ENCODE measurements at regions of chr9 and their contacts with region 1.

Region 1: DNA sequence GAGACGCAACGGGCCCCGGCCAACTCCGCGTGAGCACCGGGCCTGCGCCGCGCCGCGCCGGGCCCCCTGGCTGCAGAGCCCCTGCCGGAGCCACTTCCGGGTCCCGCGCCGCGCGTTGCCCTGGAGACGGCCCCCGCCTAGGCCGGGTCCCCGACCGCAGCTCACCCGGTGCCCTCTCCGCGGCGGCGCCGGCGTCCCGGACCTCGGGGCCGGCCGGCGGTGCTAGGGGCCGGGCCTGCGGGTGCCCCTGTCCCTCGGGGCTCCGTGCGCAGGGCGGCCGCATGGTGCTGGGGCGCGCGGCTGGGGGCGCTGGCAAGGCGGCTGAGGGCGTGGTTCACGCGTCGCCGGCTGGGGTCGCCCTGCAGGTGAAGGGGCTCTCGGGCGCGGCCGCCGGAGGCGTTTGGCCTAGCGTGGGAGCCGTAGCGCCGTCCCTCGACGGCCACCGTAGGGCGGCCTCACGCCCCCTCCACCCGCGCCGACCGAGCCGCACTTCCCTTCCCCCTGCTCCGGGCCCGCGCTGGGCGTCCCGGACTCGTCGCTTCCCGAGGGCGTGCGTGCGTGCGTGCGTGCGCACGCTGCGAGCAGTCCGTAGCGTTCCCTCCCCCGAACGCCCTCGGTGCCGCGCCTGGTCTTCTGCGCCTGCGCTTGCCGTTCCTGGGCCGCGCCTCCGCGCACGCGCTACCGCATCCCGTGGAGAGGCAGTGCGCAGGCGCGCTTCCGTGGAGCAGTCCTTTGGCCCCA is at the start of gene TMEM250:
- DNase-seq: peak; percentile 95
- ATAC-seq: peak; percentile 93
- H3K4me3 ChIP-seq: peak within 1 kb of the TSS; percentile 64
- H3K27ac ChIP-seq: peak within 1 kb of the TSS; percentile 74
- H3K4me1 ChIP-seq: peaks cover 11% of the 10 kb centered on the region
- H3K27me3 ChIP-seq: no peaks in the 10 kb centered on the region; the same call in 1 of the 2 replicates
- CTCF ChIP-seq: peak; percentile 1; the same call in 1 of the 2 replicates
- POLR2A ChIP-seq: peak; percentile 28; the same call in 1 of the 2 replicates
- RAD21 ChIP-seq: no peak
- total RNA-seq, gene TMEM250: 12.5 and 14.0 TPM in 2 replicates

Region 2: DNA sequence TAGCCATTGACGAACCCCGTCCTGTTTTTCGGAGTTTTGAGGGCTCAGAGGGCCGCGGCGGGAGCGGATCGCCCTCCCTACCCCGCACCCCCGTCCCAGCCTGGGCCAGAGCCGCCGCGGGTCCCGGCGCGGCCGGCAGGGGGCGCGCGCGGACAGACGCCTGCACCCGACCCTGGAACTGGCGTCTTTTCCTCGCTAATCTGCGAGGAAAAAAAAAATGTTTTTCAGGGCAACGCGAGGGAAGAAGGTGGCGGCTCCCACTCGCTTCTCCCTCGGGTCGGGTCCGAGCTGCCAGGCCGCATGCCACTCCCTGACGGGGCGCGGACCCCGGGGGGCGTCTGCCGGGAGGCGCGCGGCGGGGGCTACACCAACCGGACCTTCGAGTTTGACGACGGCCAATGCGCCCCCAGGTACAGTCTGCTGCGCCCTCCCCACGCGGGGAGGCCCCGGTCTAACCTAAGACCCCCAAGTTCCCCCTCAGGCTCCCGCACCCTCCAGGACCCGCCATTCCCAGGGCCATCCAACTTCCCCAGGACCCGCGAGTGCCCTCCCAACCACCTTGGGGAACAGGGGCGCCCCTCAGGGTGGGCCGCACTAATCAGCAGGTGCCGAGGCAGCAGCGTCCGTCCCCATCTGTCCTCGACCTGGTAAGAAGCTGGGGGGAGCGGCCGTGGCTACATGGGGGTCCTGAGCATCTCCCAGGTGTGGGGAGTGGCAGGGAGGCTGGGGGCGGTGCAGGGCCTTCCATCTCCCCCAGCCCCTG is 416.4 kb before region 1 on chr9 and contains the start of gene KCNT1:
- CTCF ChIA-PET with region 1: no interaction called
- POLR2A ChIA-PET with region 1: no interaction called
- dilution Hi-C with region 1: no loop called
- in situ Hi-C with region 1: loop called (anchors 10 kb)
- intact Hi-C with region 1: no loop called
- DNase-seq: peak; percentile 13
- ATAC-seq: peak; percentile 95
- H3K4me3 ChIP-seq: no peak within 1 kb of the TSS
- H3K27ac ChIP-seq: no peak within 1 kb of the TSS
- H3K4me1 ChIP-seq: peaks cover 1% of the 10 kb centered on the region; the same call in 1 of the 2 replicates
- H3K27me3 ChIP-seq: peaks cover 18% of the 10 kb centered on the region; the same call in 1 of the 2 replicates
- CTCF ChIP-seq: peak; percentile 92
- POLR2A ChIP-seq: no peak
- RAD21 ChIP-seq: peak; percentile 65
- total RNA-seq, gene KCNT1: not detected in 2 replicates

Region 3: GRCh38 chr9:135864447-135865049 is 253.9 kb before region 1 on chr9:
- CTCF ChIA-PET with region 1: interaction called, 5 read pairs
- POLR2A ChIA-PET with region 1: no interaction called
- dilution Hi-C with region 1: no loop called
- in situ Hi-C with region 1: no loop called
- intact Hi-C with region 1: loop called (anchors 2 kb)
- DNase-seq: peak; percentile 43
- ATAC-seq: peak; percentile 88
- H3K4me3 ChIP-seq: no peak overlapping the region
- H3K27ac ChIP-seq: no peak overlapping the region
- H3K4me1 ChIP-seq: peaks cover 2% of the 10 kb centered on the region
- H3K27me3 ChIP-seq: no peaks in the 10 kb centered on the region
- CTCF ChIP-seq: peak; percentile 72
- POLR2A ChIP-seq: no peak
- RAD21 ChIP-seq: peak; percentile 62

Region 4: GRCh38 chr9:135971892-135972291 is 146.6 kb before region 1 on chr9:
- CTCF ChIA-PET with region 1: interaction called, 15 read pairs
- POLR2A ChIA-PET with region 1: no interaction called
- dilution Hi-C with region 1: no loop called
- in situ Hi-C with region 1: no loop called
- intact Hi-C with region 1: loop called (anchors 1 kb)
- DNase-seq: no peak
- ATAC-seq: no peak
- H3K4me3 ChIP-seq: no peak overlapping the region
- H3K27ac ChIP-seq: no peak overlapping the region
- H3K4me1 ChIP-seq: peaks cover 6% of the 10 kb centered on the region; the same call in 1 of the 2 replicates
- H3K27me3 ChIP-seq: peaks cover 9% of the 10 kb centered on the region; the same call in 1 of the 2 replicates
- CTCF ChIP-seq: no peak
- POLR2A ChIP-seq: no peak
- RAD21 ChIP-seq: no peak

Region 5: DNA sequence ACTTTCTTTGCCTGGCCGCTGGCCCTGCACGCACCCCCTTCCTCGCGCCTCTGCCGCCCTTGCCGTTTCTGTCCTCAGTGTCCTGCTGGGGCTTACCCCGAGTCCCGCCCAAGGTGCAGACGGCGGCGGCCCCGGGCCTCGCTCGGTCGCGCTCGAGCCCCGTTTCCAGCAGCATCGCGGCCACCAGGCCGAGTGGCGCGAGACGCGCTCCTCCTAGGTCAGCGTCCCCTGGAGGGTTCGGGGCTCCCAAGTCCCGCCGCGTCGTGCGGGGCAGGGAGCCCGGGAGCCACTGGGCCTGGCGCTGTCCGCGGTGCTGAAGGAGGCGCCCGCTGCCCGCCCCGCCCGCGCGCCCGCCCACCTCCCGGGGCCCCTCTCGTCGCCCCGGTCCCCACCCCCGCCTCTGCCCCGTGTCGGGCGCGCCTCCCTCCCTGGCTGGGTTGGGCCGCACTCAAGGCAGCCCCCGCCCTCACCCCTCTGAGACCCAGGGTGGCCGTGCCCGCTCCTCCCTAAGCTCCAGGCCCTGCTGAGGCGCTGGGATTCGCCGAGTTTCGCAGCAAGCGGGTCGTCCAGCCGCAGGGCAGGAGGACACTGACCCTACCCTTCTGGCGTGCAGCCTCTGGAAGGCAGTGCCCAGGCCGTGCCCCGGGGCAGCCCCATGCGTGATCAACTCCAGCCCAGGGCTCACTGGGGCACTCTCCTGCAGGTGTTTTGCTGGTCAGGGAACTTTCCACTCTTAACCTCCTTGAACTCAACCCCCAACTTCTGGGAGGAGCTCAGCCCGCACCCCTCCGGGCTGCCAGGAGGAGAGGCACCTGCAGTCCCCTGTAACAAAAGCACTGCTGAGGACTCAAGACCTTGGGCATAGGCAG is 86.6 kb after region 1 on chr9 and contains the start of gene LHX3:
- CTCF ChIA-PET with region 1: no interaction called
- POLR2A ChIA-PET with region 1: no interaction called
- dilution Hi-C with region 1: no loop called
- in situ Hi-C with region 1: no loop called
- intact Hi-C with region 1: no loop called
- DNase-seq: no peak
- ATAC-seq: peak; percentile 85
- H3K4me3 ChIP-seq: no peak within 1 kb of the TSS
- H3K27ac ChIP-seq: no peak within 1 kb of the TSS
- H3K4me1 ChIP-seq: no peaks in the 10 kb centered on the region
- H3K27me3 ChIP-seq: peaks cover 42% of the 10 kb centered on the region
- CTCF ChIP-seq: no peak
- POLR2A ChIP-seq: no peak
- RAD21 ChIP-seq: no peak
- total RNA-seq, gene LHX3: not detected in 2 replicates

Measured in IMR-90 (cell line).